ENCODE measurements at regions of chr16 and their contacts with region 1.

Region 1: DNA sequence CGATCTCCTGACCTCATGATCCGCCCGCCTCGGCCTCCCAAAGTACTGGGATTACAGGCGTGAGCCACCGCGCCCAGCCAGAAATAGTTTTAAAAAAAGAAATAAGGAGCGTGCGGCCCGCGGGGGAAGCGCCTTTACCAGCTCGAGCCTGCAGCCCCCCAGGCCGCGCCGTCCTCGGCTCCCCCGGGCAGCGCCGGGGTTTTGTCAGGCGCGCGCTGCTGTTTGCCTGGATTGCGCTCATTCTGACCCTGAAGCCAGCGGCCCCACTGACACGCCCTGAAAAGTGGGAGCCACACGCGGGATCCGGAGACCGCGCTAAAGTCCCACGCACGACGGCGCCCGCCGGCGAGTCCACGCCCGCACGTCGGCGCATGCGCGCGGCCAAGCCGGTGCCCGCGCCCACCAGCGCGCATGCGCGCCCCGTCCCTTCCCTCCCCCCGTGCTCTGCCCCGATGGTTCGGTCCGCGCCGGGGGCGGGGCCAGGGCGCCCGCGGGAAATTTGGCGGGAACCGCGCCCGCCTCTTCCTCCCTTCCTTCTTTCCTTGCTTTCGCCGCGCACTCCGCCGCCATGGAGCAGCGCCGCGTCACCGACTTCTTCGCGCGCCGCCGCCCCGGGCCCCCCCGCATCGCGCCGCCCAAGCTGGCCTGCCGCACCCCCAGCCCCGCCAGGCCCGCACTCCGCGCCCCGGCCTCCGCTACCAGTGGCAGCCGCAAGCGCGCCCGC is at the start of gene CDT1:
- DNase-seq: peak; percentile 18 to 89 (median 78)

Region 2: GRCh38 chr16:88737298-88738150 is 65.9 kb before region 1 on chr16:
- intact Hi-C with region 1: loop called (anchors 5 kb)
- DNase-seq: peak in 41 of 42 donors; percentile 19 to 87 (median 65)

Measured in head of caudate nucleus (tissue), 42 donors.